AG04449 (cell line): ENCODE measurements at regions of chr3 and their contacts with region 1.

Region 1: DNA sequence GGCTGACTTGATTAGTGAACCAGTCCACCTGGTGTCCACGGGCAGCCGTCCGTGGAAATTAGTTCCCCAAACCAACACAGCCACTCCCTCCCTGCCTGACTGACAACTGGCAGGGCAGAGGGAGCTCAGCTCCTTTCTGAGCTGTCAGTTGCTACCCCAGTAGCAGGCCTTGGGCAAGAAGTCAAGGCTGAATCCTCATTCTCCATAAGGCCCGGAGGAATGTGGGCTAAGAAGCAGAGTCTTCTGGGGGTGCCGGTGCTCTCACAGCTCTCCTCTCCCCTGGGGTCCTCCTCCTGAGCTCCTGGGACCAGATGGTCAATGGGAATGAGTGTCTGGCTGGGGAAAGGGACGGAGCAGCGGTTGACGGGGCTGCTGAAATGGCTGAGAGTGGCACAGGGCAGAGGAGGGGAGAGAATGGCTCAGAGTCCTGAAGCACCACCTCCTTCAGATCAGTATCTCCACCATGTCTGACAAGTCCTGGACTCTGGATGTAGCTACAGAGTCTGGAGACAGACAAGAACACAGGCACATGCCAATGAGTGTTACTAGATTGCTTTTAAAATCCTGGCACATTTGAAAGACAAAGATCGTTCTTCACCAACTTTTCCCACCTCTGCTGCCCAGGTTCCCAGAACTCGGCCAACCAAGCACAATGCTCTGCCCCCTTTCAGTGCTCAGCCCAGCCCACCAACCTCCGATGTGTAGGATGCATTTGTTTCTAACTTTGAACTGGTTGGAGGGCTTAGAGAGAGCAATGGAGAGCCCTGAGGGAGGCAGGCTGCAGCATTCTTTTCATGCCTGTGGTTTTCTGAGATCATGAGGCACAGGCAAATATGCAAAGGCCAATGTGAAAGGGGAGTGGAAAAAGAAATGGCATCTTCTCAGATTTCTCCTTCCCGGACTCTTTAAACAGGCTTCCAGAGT is 16.7 kb downstream of the AMOTL2 start:
- DNase-seq: peak; percentile 88
- H3K4me3 ChIP-seq: no peak overlapping the region; the same call in 1 of the 2 replicates
- CTCF ChIP-seq: no peak

Region 2: DNA sequence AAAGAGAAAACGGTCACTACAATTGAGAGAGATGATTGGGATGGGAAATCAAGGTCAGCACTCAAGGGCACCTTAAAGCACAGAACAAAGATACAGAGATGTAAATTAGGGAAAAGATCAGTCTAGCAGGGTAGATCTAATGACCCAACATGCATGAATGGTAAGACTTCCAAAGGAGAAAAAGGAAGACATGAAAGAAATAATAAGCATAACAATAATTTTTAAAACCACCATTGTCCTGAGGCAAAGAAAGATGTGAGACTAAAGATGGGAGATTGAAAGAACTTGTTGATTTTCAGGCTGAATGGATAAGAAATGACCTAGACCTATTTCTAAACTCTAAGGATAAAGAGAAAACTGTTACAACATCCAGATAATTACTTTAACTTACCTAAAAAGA is 51.5 kb after region 1 on chr3:
- CTCF ChIA-PET with region 1: no interaction called
- POLR2A ChIA-PET with region 1: no interaction called
- DNase-seq: no peak
- H3K4me3 ChIP-seq: no peak overlapping the region
- CTCF ChIP-seq: no peak

Region 3: GRCh38 chr3:134485718-134486576 is 128.4 kb after region 1 on chr3 and contains the starts of genes ANAPC13 and CEP63:
- CTCF ChIA-PET with region 1: interaction called, 424 read pairs
- POLR2A ChIA-PET with region 1: interaction called, 24 read pairs
- DNase-seq: peak; percentile 96
- H3K4me3 ChIP-seq: peak within 1 kb of the TSS; percentile 82
- CTCF ChIP-seq: no peak